Tibial artery (tissue), 4 donors: ENCODE measurements at regions of chr5 and their contacts with region 1.

Region 1: DNA sequence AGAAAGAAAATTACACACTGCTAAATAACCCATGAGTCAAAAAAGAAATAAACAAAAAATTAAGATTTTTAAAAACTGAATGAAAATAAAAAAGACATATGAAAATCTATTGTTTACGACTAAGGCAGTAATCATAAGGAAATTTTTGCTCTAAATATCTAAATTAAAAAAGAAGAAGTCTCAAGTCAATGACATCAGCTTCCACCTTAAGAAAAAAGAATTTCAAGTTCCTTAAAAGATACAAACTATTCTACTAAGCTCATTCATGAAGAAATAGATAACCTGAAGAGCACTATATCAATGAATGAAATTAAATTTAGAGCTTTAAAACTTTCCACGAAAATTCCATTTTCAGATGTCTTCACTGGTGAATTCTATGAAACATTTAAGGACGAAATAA is 15.7 kb upstream of the STARD4 start:
- DNase-seq: no peak
- H3K4me3 ChIP-seq: no peak overlapping the region
- H3K27ac ChIP-seq: no peak overlapping the region
- H3K4me1 ChIP-seq: peaks cover 0 to 9% (median 0%) of the 10 kb centered on the region in 4 donors
- H3K27me3 ChIP-seq: no peaks in the 10 kb centered on the region
- CTCF ChIP-seq: no peak

Region 2: GRCh38 chr5:112154940-112155686 is 627.1 kb after region 1 on chr5:
- intact Hi-C with region 1: loop called (anchors 10 kb)
- DNase-seq: no peak
- H3K4me3 ChIP-seq: no peak overlapping the region
- H3K27ac ChIP-seq: no peak overlapping the region
- H3K4me1 ChIP-seq: peaks cover 0 to under 1% (median under 1%) of the 10 kb centered on the region in 4 donors
- H3K27me3 ChIP-seq: no peaks in the 10 kb centered on the region
- CTCF ChIP-seq: no peak